OCI-LY7 (cell line): ENCODE measurements at regions of chr2 and their contacts with region 1.

Region 1: DNA sequence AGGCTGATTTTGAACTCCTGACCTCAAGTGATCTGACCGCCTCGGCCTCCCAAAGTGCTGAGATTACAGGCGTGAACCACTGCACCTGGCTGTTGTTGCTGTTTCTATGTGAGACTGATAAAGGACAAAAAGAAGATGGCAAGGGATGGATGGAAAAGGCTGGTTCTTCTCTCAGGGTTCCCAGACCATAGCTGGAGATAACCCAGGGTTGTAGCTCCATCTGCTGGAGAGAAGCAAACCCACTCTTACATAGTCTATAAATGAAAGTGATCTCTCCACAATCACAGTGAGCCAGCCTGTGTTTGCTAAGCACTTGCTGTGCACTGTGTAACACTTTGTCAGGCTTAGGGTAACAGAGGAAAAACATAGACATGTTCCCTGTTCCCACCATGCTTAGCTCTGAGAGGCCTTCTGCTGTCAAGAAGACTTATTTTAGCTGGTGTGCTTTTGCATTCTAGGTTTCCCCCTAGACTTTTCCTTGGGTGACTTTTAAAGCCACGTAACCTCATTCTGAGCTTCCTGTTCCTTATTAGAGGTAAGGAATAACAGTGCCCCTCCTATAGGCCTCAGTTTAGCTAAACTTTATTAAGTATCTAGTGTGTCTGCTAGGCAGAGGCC is 49.7 kb downstream of the LIMS1 start:
- DNase-seq: peak; percentile 79
- H3K4me3 ChIP-seq: no peak overlapping the region
- H3K27ac ChIP-seq: no peak overlapping the region
- H3K4me1 ChIP-seq: peaks cover 28% of the 10 kb centered on the region
- CTCF ChIP-seq: peak; percentile 86

Region 2: DNA sequence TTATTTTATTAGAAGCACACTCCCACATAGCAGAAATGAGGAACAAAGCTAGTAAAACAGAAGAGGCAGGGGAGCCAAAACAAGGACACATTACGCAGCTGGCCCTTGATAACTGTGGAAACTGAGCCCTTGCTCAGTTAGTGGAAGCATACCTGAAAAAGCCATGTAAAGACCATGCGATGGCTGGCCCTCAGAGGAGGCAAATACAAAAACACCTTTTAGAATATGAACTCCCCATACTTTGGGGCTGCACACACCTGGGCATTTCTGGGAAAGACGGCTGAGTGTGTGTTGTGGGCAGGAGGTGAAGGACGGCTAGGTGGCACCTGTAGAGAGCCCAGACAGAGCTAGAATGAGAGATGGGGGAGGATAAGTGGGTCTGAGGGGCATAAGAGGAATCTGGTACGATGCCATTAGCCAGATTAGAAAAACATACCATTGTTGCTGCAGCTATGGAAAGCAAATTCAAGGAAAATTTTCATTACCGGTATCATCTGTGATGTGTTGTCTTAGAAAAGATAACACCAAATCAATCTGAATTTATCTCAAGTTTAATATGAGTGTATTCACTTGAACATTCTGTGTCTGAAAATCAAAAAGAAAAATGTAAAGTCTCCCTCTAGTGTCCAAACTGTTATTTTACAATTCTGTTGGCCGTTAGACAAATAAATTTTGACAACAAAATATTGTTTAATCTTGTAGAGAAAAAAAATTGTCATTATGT is 389.4 kb before region 1 on chr2:
- CTCF ChIA-PET with region 1: no interaction called
- POLR2A ChIA-PET with region 1: interaction called, 3 read pairs
- intact Hi-C with region 1: loop called (anchors 5 kb)
- DNase-seq: no peak
- H3K4me3 ChIP-seq: no peak overlapping the region
- H3K27ac ChIP-seq: no peak overlapping the region
- H3K4me1 ChIP-seq: no peaks in the 10 kb centered on the region
- CTCF ChIP-seq: peak; percentile 83

Region 3: GRCh38 chr2:108351889-108352288 is 232.1 kb before region 1 on chr2:
- CTCF ChIA-PET with region 1: no interaction called
- POLR2A ChIA-PET with region 1: no interaction called
- intact Hi-C with region 1: loop called (anchors 5 kb)
- DNase-seq: no peak
- H3K4me3 ChIP-seq: no peak overlapping the region
- H3K27ac ChIP-seq: no peak overlapping the region
- H3K4me1 ChIP-seq: no peaks in the 10 kb centered on the region
- CTCF ChIP-seq: no peak

Region 4: GRCh38 chr2:108396845-108397244 is 187.2 kb before region 1 on chr2:
- CTCF ChIA-PET with region 1: no interaction called
- POLR2A ChIA-PET with region 1: no interaction called
- intact Hi-C with region 1: loop called (anchors 1 kb)
- DNase-seq: peak; percentile 33
- H3K4me3 ChIP-seq: no peak overlapping the region
- H3K27ac ChIP-seq: no peak overlapping the region
- H3K4me1 ChIP-seq: no peaks in the 10 kb centered on the region
- CTCF ChIP-seq: peak; percentile 69

Region 5: DNA sequence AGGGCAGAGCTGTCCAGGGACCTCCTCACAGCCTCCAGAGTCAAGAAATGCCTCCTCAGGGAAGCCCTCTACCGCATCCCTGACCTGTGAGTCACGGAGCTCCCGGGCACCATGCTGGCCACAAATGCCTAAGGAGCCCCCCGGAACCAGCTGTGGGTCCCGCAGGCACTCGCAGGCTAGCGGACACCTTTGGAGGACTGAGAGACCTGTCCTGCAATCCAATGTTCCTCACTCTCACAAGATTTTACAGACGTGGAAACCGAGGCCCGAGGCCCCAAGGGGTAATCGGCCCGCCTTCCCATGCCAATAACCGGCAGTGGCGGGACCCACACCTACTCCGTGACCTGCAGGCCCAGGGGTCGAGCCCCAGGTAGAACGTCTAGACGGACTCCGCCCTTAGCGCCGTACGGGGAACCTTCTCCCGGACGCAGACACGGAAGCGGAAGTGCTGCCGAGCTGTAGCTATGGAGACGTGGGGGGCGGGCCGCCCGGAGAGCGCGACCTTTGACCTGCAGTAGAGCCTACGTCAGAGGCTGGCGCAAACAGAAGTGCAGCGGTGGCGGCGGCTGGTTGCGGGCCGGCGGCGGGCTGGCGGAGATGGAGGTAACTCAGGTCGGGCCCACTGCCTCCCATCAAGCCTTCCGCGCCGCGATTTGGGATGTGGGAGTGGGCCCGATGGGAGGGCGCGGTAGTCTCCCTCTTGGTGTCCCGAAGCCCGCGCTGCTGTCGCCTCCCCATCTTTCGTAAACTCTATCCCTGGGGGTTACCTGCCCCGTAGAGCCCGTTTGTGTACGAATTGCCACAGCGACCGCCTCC is 135.1 kb before region 1 on chr2 and contains the start of gene GCC2:
- CTCF ChIA-PET with region 1: no interaction called
- POLR2A ChIA-PET with region 1: no interaction called
- intact Hi-C with region 1: loop called (anchors 5 kb)
- DNase-seq: peak; percentile 96
- H3K4me3 ChIP-seq: peak within 1 kb of the TSS; percentile 95
- H3K27ac ChIP-seq: peak within 1 kb of the TSS; percentile 39
- H3K4me1 ChIP-seq: peaks cover 12% of the 10 kb centered on the region
- CTCF ChIP-seq: no peak
- total RNA-seq, gene GCC2: 19.7 and 28.2 TPM in 2 replicates

Region 6: DNA sequence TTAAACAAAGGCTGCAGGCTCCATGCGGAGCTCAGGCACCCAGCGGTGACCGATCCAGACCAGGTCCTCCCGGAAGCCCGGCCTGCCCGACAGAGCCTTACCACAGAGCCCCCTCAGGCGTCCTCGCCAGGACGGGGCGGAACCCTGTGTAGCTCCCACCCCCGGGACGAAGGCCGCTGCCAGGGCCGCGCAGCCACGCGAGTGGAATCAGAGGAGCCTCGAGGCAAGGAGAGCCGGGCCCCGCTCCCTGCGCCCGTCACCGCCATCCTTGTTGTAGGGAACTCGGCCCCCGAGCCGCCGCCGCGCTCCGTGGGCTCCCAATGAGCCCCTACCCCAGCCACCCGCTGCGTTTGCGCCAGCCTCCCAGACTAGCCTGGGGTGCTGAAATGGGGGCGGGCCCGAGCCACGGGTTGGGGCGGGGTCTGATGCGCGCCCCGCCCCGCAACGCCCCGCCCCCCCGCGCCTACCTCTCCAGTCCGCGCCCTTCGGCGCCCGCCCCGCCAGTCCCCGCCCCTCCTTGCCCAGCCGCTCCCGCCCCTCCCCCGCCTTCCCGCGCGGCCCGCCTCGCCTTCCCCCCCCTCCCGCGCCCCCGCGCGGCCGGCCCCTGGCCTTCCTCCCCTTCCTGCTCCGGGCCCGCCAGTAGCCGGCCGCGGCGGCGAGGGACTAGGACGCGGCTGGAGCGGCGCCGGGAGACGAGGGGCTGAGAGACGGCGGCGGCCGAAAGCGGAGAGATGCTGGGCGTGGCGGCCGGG is 50.0 kb before region 1 on chr2 and contains the start of gene LIMS1:
- CTCF ChIA-PET with region 1: no interaction called
- POLR2A ChIA-PET with region 1: no interaction called
- intact Hi-C with region 1: loop called (anchors 2 kb)
- DNase-seq: peak; percentile 89
- H3K4me3 ChIP-seq: peak within 1 kb of the TSS; percentile 76
- H3K27ac ChIP-seq: peak within 1 kb of the TSS; percentile 48
- H3K4me1 ChIP-seq: peaks cover 15% of the 10 kb centered on the region
- CTCF ChIP-seq: no peak
- total RNA-seq, gene LIMS1: 33.6 and 53.3 TPM in 2 replicates

Region 7: DNA sequence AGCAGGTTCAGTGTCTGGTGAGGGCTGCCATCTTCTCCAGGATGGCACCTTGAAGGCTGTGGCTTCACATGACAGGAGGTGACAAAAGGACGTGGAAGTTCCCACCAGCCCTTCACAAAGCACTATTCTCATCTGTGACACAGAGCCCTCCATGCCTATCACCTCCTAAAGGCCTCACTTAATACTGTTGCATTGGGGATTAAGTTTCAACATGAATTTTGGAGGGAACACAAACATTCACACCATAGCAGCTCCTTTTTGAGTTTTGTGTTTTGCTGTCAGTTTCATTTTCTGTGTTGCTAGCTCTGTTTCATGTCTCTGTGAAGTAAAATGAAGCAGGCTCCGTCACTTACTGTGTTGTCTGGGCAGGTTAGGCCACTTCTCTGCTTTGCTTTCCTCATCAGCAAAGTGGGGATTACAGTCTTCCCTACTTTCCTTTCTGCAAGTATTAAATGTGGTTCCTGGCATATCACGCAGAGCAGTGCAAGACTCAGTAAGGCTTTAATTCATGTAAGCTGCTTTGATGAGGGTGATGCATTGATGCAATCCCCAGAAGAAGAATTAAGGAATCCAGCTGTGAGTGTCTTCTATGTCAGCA is 18.1 kb before region 1 on chr2:
- CTCF ChIA-PET with region 1: no interaction called
- POLR2A ChIA-PET with region 1: no interaction called
- intact Hi-C with region 1: no loop called
- DNase-seq: no peak
- H3K4me3 ChIP-seq: no peak overlapping the region
- H3K27ac ChIP-seq: no peak overlapping the region
- H3K4me1 ChIP-seq: no peaks in the 10 kb centered on the region
- CTCF ChIP-seq: no peak